ENCODE measurements at regions of chr4 and their contacts with region 1.

Region 1: GRCh38 chr4:101347557-101348366 is 436 bp upstream of the PPP3CA start:
- DNase-seq: peak; percentile 92
- ATAC-seq: peak; percentile 84
- H3K4me3 ChIP-seq: peak overlapping the region; percentile 76 to 84
- H3K27ac ChIP-seq: peak overlapping the region; percentile 94
- H3K4me1 ChIP-seq: peaks cover 25 to 39% of the 10 kb centered on the region in 2 experiments
- H3K27me3 ChIP-seq: no peaks in the 10 kb centered on the region
- CTCF ChIP-seq: no peak
- POLR2A ChIP-seq: peak; percentile 56
- RAD21 ChIP-seq: no peak

Region 2: GRCh38 chr4:101020956-101021355 is 326.8 kb before region 1 on chr4:
- CTCF ChIA-PET with region 1: no interaction called
- POLR2A ChIA-PET with region 1: no interaction called
- RAD21 ChIA-PET with region 1: interaction called in 1 of 2 experiments, 7 read pairs
- intact Hi-C with region 1: loop called (anchors 10 kb)
- DNase-seq: peak; percentile 79
- ATAC-seq: peak; percentile 67
- H3K4me3 ChIP-seq: peak overlapping the region in 1 of 2 experiments; percentile 29; a peak in 2 of 4 replicates
- H3K27ac ChIP-seq: peak overlapping the region; percentile 95
- H3K4me1 ChIP-seq: peaks cover 55 to 65% of the 10 kb centered on the region in 2 experiments
- H3K27me3 ChIP-seq: no peaks in the 10 kb centered on the region
- CTCF ChIP-seq: no peak
- POLR2A ChIP-seq: no peak
- RAD21 ChIP-seq: no peak

Region 3: GRCh38 chr4:101238706-101239105 is 109.1 kb before region 1 on chr4:
- CTCF ChIA-PET with region 1: no interaction called
- POLR2A ChIA-PET with region 1: no interaction called
- RAD21 ChIA-PET with region 1: interaction called in 1 of 2 experiments, 7 read pairs
- intact Hi-C with region 1: loop called (anchors 5 kb)
- DNase-seq: no peak
- ATAC-seq: peak; percentile 28; the same call in 1 of the 2 replicates
- H3K4me3 ChIP-seq: peak overlapping the region in 1 of 2 experiments; percentile 16; a peak in 2 of 4 replicates
- H3K27ac ChIP-seq: peak overlapping the region; percentile 75
- H3K4me1 ChIP-seq: peaks cover 53 to 62% of the 10 kb centered on the region in 2 experiments
- H3K27me3 ChIP-seq: no peaks in the 10 kb centered on the region
- CTCF ChIP-seq: no peak
- POLR2A ChIP-seq: no peak
- RAD21 ChIP-seq: no peak; the same call in 1 of the 2 replicates

Region 4: GRCh38 chr4:101730291-101731117 is 382.7 kb after region 1 on chr4:
- CTCF ChIA-PET with region 1: interaction called, 5 read pairs
- POLR2A ChIA-PET with region 1: no interaction called
- RAD21 ChIA-PET with region 1: no interaction called
- intact Hi-C with region 1: loop called (anchors 5 kb)
- DNase-seq: peak; percentile 78
- ATAC-seq: peak; percentile 100
- H3K4me3 ChIP-seq: no peak overlapping the region
- H3K27ac ChIP-seq: no peak overlapping the region
- H3K4me1 ChIP-seq: no peaks in the 10 kb centered on the region; a peak in 1 of 4 replicates
- H3K27me3 ChIP-seq: no peaks in the 10 kb centered on the region
- CTCF ChIP-seq: peak; percentile 47 to 75 (median 69); a peak in 5 of 6 replicates
- POLR2A ChIP-seq: no peak
- RAD21 ChIP-seq: peak; percentile 90

Measured in HCT116 (cell line).